ENCODE measurements at regions of chr2 and their contacts with region 1.

Region 1: GRCh38 chr2:207334624-207335371 is 169.1 kb upstream of the KLF7 start:
- DNase-seq: peak; percentile 77
- H3K4me3 Mint-ChIP-seq: peak overlapping the region; percentile 59
- H3K27ac Mint-ChIP-seq: peak overlapping the region; percentile 98
- H3K4me1 Mint-ChIP-seq: peaks cover 82% of the 10 kb centered on the region
- H3K27me3 Mint-ChIP-seq: no peaks in the 10 kb centered on the region

Region 2: DNA sequence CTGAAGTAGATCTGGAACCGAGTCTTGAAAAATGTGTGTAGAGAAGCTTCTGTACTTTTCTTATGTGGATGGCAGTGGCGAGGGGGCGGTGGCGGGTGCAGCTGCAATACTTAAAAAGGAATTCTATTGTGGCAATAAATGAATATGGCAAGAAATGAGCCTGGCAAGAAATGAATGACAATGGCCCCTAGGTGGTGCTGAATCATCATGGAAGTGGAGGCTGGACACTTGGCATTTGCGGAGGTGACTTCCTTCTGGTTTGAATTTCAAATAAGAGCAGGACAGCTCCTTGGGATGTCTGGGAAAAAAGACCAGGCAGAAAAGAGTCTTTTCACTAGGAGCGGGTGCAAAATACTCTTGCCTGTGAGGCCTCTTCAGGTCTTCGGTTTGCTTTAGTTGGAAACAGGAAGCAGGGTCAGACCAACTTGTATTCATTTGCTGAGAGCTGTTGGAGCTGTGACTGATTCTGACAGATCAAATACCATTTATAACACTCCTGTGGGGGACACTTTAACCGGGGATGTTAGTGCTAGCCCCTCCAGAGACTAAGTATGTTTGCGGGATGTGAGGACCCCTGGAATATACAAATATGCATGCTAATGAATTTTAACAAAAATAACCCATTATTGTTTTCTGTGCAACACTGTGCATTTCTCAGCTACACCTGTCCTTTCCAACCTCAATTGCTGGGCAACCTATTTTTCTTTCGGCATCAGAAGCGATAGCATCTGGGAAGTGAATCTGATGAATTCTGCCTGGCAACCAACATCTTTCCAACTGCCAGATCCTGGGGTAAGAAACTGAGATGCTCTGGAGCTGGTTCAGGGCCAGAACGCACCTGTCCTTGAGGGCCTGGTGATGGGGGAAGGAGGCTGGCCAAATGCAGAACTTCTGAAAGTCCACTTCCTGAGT is 534.0 kb before region 1 on chr2:
- CTCF ChIA-PET with region 1: no interaction called
- POLR2A ChIA-PET with region 1: no interaction called
- intact Hi-C with region 1: loop called (anchors 10 kb)
- DNase-seq: peak; percentile 57
- H3K4me3 Mint-ChIP-seq: no peak overlapping the region
- H3K27ac Mint-ChIP-seq: no peak overlapping the region
- H3K4me1 Mint-ChIP-seq: peaks cover 13% of the 10 kb centered on the region
- H3K27me3 Mint-ChIP-seq: no peaks in the 10 kb centered on the region

Region 3: GRCh38 chr2:207156451-207157161 is 178.2 kb before region 1 on chr2:
- CTCF ChIA-PET with region 1: no interaction called
- POLR2A ChIA-PET with region 1: interaction called, 4 read pairs
- intact Hi-C with region 1: loop called (anchors 2 kb)
- DNase-seq: peak; percentile 66
- H3K4me3 Mint-ChIP-seq: no peak overlapping the region
- H3K27ac Mint-ChIP-seq: peak overlapping the region; percentile 46
- H3K4me1 Mint-ChIP-seq: peaks cover 89% of the 10 kb centered on the region
- H3K27me3 Mint-ChIP-seq: no peaks in the 10 kb centered on the region

Region 4: GRCh38 chr2:207202645-207203044 is 132.2 kb before region 1 on chr2:
- CTCF ChIA-PET with region 1: no interaction called
- POLR2A ChIA-PET with region 1: no interaction called
- intact Hi-C with region 1: no loop called
- DNase-seq: peak; percentile 32
- H3K4me3 Mint-ChIP-seq: no peak overlapping the region
- H3K27ac Mint-ChIP-seq: no peak overlapping the region
- H3K4me1 Mint-ChIP-seq: no peaks in the 10 kb centered on the region
- H3K27me3 Mint-ChIP-seq: no peaks in the 10 kb centered on the region

Region 5: GRCh38 chr2:207283356-207283755 is 51.4 kb before region 1 on chr2:
- CTCF ChIA-PET with region 1: interaction called, 3 read pairs
- POLR2A ChIA-PET with region 1: interaction called, 4 read pairs
- intact Hi-C with region 1: loop called (anchors 1 kb)
- DNase-seq: peak; percentile 34
- H3K4me3 Mint-ChIP-seq: no peak overlapping the region
- H3K27ac Mint-ChIP-seq: peak overlapping the region; percentile 65
- H3K4me1 Mint-ChIP-seq: peaks cover 67% of the 10 kb centered on the region
- H3K27me3 Mint-ChIP-seq: no peaks in the 10 kb centered on the region

Region 6: GRCh38 chr2:207317378-207317984 is 17.3 kb before region 1 on chr2:
- CTCF ChIA-PET with region 1: interaction called, 4 read pairs
- POLR2A ChIA-PET with region 1: interaction called, 4 read pairs
- intact Hi-C with region 1: loop called (anchors 1 kb)
- DNase-seq: no peak
- H3K4me3 Mint-ChIP-seq: no peak overlapping the region
- H3K27ac Mint-ChIP-seq: peak overlapping the region; percentile 83
- H3K4me1 Mint-ChIP-seq: peaks cover 30% of the 10 kb centered on the region
- H3K27me3 Mint-ChIP-seq: peaks cover 3% of the 10 kb centered on the region

Region 7: DNA sequence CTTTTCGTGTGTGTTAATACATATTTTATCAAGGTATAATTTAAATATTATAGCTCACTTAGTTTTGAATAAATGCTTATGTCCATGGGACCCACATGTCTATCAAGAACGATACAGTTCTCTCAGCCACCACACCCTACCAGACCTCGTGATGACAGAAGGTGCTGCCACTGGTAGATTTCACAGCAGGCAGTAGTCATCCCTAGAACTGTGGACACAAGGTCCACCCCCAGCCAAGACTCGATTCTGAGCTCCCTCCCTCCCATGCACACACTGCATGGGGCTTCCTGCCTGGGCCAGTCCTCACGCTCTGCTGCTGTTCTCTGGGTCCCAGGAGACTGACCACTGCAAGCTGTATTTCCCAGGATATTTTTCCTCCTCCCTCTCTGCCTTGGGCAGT is 168.4 kb after region 1 on chr2:
- CTCF ChIA-PET with region 1: no interaction called
- POLR2A ChIA-PET with region 1: no interaction called
- intact Hi-C with region 1: loop called (anchors 2 kb)
- DNase-seq: peak; percentile 35
- H3K4me3 Mint-ChIP-seq: no peak overlapping the region
- H3K27ac Mint-ChIP-seq: no peak overlapping the region
- H3K4me1 Mint-ChIP-seq: peaks cover 41% of the 10 kb centered on the region
- H3K27me3 Mint-ChIP-seq: no peaks in the 10 kb centered on the region

Region 8: GRCh38 chr2:207710814-207711740 is 376.3 kb after region 1 on chr2 and contains the start of gene CCNYL1:
- CTCF ChIA-PET with region 1: no interaction called
- POLR2A ChIA-PET with region 1: no interaction called
- intact Hi-C with region 1: loop called (anchors 10 kb)
- DNase-seq: peak; percentile 99
- H3K4me3 Mint-ChIP-seq: peak within 1 kb of the TSS; percentile 88
- H3K27ac Mint-ChIP-seq: peak within 1 kb of the TSS; percentile 82
- H3K4me1 Mint-ChIP-seq: peaks cover 25% of the 10 kb centered on the region
- H3K27me3 Mint-ChIP-seq: no peaks in the 10 kb centered on the region
- total RNA-seq, gene CCNYL1: 5.7 to 6.4 TPM